ENCODE measurements at regions of chr1 and their contacts with region 1.

Region 1: DNA sequence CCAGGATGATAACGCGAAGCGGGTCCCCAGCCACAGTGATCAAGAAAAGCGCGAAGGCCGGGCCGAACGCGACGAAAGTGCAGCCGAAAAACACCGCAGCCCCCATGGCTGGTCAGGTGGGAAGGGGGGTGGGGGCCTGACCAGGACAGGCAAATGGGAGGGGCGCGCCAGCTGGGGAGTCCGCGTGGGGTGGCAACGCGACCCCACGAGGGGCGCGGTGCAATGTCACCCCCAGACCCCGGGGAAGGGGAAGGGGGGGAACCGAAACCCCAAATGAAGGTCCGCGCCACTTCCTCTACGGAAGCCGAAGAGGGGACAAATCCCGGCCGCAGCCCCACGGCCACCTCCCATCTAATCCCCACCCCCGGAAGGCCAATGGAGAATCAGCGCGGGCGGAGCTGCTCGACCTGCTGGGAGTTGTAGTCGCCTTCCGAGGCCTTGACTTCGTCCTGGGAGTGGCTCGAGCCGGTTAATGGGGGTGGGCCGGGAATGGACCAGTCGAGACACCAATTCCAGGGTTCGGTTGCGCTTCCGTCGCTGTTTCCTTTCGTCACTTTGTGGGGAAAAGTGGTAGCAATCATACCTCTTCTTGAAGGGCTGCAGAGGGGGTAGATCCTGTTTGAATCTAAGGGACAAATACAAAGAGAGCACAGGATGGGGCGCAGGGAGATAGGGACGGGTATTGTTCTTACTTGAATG is at the start of gene APH1A:
- DNase-seq: peak; percentile 98
- H3K4me3 Mint-ChIP-seq: peak within 1 kb of the TSS; percentile 89
- H3K27ac Mint-ChIP-seq: peak within 1 kb of the TSS; percentile 96
- H3K4me1 Mint-ChIP-seq: peaks cover 23% of the 10 kb centered on the region
- H3K27me3 Mint-ChIP-seq: no peaks in the 10 kb centered on the region
- total RNA-seq, gene APH1A: 71.2 to 75.7 TPM

Region 2: DNA sequence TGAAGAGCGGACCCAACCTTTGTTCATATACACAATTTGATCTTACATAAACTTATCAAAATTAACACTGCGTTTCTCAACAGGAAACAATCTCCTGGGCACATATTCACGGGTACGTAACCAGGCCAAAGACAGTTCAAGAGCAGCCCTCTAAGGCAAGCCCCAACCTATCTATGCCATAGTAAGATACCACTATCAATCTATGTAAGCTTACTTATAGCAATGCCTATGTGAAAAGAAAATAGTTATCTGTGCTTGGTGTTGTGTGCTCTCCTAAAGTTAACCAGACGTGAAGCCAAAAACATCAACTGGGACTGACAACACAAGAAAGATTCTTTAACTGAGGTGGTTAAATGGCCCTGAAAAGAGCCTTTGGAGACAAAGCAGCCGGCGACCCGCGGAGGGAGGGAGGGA is 418.9 kb before region 1 on chr1:
- CTCF ChIA-PET with region 1: no interaction called
- intact Hi-C with region 1: no loop called
- DNase-seq: peak; percentile 27
- H3K4me3 Mint-ChIP-seq: peak overlapping the region; percentile 81
- H3K27ac Mint-ChIP-seq: peak overlapping the region; percentile 86
- H3K4me1 Mint-ChIP-seq: peaks cover 43% of the 10 kb centered on the region
- H3K27me3 Mint-ChIP-seq: no peaks in the 10 kb centered on the region

Region 3: DNA sequence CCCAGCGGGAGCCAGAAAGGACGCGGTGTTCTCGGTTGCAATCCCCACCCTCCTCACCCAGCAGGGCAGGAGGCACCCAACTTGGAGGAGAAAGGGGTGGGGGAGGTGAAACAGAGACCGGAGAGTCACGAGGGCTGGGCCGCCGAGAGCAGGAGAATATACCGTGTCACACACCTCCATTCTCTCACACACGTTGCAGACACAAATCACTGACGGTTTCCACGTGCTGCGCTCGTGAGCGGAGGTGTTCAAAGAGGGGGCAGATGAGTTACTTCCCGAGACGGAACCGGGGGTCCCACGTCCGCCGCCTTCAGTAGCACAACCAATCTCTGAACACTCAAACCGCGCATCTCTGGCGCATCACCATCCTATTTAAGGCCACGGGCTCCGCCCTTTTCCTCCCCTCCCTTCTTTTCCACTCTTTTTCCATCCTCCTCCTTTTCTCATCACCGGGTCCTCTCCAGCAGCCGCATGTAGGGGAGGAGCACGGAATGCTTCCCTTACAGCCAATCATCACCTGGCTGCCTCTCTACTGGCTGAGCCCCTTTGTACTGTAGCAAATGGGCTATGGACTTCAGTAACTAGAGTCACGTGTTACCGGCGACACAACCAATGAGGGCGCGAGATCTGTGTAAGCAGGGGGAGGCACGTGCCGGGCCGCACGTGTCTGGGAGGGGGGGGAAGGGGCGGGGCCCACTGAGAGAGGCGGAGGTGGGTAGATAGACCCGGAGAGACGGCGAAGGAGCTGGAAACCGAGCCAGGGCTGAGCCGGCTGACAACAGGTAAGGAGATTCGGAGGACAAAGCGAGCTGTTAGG is 13.2 kb after region 1 on chr1 and contains the start of gene CIART:
- CTCF ChIA-PET with region 1: interaction called, 5 read pairs
- intact Hi-C with region 1: loop called (anchors 1 kb)
- DNase-seq: peak; percentile 78
- H3K4me3 Mint-ChIP-seq: peak within 1 kb of the TSS; percentile 82
- H3K27ac Mint-ChIP-seq: no peak within 1 kb of the TSS
- H3K4me1 Mint-ChIP-seq: peaks cover 24% of the 10 kb centered on the region
- H3K27me3 Mint-ChIP-seq: no peaks in the 10 kb centered on the region
- total RNA-seq, gene CIART: 0.84 to 1.0 TPM

Region 4: GRCh38 chr1:150293433-150294168 is 24.7 kb after region 1 on chr1 and contains the start of gene MRPS21:
- CTCF ChIA-PET with region 1: no interaction called
- intact Hi-C with region 1: loop called (anchors 2 kb)
- DNase-seq: peak; percentile 93
- H3K4me3 Mint-ChIP-seq: peak within 1 kb of the TSS; percentile 90
- H3K27ac Mint-ChIP-seq: peak within 1 kb of the TSS; percentile 91
- H3K4me1 Mint-ChIP-seq: peaks cover 40% of the 10 kb centered on the region
- H3K27me3 Mint-ChIP-seq: no peaks in the 10 kb centered on the region
- total RNA-seq, gene MRPS21: 80.3 to 83.8 TPM

Region 5: DNA sequence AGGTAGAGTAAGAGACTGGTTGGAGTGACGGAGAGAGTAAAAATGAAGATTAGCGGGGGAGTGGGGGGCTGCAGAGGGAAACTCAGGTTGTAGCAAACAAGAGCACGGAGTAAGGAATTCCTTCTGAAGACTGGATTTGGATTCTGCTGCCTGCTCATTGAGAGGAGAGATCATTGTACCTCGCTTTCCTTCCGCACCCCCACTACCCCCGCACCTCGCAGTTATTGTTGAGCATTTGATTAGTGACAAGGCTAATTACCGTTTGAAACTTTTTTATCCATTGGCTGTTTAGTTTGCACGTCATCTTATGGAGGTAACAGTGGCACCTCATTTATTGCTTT is 52.9 kb after region 1 on chr1:
- CTCF ChIA-PET with region 1: no interaction called
- intact Hi-C with region 1: loop called (anchors 1 kb)
- DNase-seq: no peak
- H3K4me3 Mint-ChIP-seq: peak overlapping the region; percentile 99
- H3K27ac Mint-ChIP-seq: peak overlapping the region; percentile 99
- H3K4me1 Mint-ChIP-seq: peaks cover 36% of the 10 kb centered on the region
- H3K27me3 Mint-ChIP-seq: no peaks in the 10 kb centered on the region